OCI-LY7 (cell line): ENCODE measurements at regions of chr13 and their contacts with region 1.

Region 1: DNA sequence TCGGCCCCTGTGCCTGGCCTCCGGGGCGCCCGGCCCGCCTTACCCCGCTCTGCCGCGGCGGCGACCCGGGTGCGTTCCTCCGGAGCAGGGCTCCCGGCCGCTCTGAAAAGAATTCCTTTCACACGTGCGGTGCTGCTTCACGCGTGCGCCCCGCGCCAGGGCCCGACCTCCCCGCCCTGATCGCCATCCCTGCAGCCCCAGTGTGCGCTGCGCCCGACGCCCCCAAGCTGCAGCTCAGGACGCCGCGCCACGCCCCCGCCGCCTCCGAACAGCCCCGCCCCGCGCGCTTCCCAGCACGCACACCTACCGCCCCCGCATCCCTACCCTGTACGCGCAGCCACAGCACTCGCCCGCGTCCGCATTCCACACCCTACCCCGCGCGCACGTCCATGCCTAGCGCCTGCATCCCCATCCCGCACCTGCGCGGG is at the start of gene GJA3:
- DNase-seq: no peak
- H3K4me3 ChIP-seq: peak within 1 kb of the TSS; percentile 55
- H3K27ac ChIP-seq: no peak within 1 kb of the TSS
- H3K4me1 ChIP-seq: peaks cover 9% of the 10 kb centered on the region
- CTCF ChIP-seq: no peak
- total RNA-seq, gene GJA3: not detected in 2 replicates

Region 2: DNA sequence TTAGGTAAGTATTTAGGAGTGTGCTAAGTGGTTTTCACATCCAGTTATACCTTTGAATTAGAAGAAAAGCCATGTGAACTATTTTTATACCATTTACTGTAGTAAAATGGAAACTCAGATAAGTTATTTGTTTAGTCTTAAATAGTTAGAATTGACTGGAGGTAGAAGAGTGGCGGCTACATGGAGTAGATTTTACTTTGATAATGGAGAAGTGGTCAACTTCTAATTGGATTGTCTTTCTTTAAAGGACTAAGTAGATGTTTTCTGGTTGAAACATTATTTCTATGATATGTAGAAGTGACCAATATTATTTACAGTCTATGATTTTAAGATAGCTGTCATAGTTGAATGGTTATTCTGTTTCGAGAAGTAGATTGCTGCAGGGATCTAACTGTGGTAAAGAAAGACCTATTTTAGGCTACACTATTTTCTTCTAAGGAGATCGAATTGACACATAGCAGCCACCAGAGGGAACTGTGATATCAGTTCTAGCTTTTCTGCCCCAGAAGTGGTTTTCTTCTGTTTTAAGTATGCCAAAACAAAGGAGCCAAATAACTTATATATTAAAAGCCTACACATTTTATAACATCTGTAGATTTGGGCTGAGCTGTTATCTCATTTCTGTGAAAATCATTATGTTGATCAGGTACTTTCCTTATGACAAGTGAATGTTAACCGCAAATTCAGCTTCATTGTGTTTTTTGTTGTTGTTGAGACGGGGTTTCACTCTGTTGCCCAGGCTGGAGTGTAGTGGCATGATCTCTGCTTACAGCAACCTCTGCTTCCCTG is 176.2 kb before region 1 on chr13:
- CTCF ChIA-PET with region 1: no interaction called
- POLR2A ChIA-PET with region 1: no interaction called
- intact Hi-C with region 1: loop called (anchors 1 kb)
- DNase-seq: peak; percentile 49
- H3K4me3 ChIP-seq: no peak overlapping the region
- H3K27ac ChIP-seq: peak overlapping the region; percentile 12
- H3K4me1 ChIP-seq: peaks cover 14% of the 10 kb centered on the region
- CTCF ChIP-seq: peak; percentile 80